IMR-90 (cell line): ENCODE measurements at regions of chr17 and their contacts with region 1.

Region 1: GRCh38 chr17:13544292-13544691 is 57.4 kb downstream of the HS3ST3A1 start:
- DNase-seq: peak; percentile 98
- ATAC-seq: peak; percentile 77
- H3K4me3 ChIP-seq: no peak overlapping the region; the same call in 1 of the 2 replicates
- H3K27ac ChIP-seq: peak overlapping the region; percentile 40; the same call in 1 of the 2 replicates
- H3K4me1 ChIP-seq: peaks cover 17% of the 10 kb centered on the region
- H3K27me3 ChIP-seq: no peaks in the 10 kb centered on the region
- CTCF ChIP-seq: no peak
- POLR2A ChIP-seq: no peak
- RAD21 ChIP-seq: no peak

Region 2: DNA sequence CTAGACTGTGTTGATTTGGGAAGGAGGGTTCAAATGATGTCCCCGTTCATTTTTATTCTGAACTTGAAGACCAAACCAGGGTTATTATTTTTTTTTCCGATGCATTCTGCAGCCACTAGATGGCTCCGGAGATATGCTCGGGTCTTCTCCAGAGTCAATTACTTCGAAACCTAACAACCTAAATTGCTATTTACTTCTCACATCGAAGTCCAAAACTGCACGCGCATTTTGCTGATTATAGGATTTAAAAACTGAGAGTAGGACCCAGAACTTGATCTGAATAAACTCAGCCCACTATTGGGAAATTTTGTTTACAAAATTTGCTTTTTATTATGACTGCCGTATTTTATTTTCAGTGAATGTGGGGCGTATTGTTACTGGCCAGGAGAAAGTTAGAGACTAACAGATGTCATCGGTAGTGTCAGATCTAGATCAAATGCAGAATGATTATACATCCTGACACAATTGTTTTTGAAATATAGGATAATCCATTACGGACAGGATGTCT is 206.4 kb before region 1 on chr17:
- CTCF ChIA-PET with region 1: no interaction called
- POLR2A ChIA-PET with region 1: no interaction called
- dilution Hi-C with region 1: no loop called
- in situ Hi-C with region 1: no loop called
- intact Hi-C with region 1: loop called (anchors 5 kb)
- DNase-seq: peak; percentile 78
- ATAC-seq: peak; percentile 84
- H3K4me3 ChIP-seq: peak overlapping the region; percentile 54
- H3K27ac ChIP-seq: no peak overlapping the region
- H3K4me1 ChIP-seq: peaks cover 5% of the 10 kb centered on the region
- H3K27me3 ChIP-seq: no peaks in the 10 kb centered on the region
- CTCF ChIP-seq: peak; percentile 92
- POLR2A ChIP-seq: peak; percentile 45; the same call in 1 of the 2 replicates
- RAD21 ChIP-seq: peak; percentile 93

Region 3: GRCh38 chr17:13420878-13421277 is 123.4 kb before region 1 on chr17:
- CTCF ChIA-PET with region 1: no interaction called
- POLR2A ChIA-PET with region 1: no interaction called
- dilution Hi-C with region 1: no loop called
- in situ Hi-C with region 1: no loop called
- intact Hi-C with region 1: no loop called
- DNase-seq: peak; percentile 92
- ATAC-seq: peak; percentile 70
- H3K4me3 ChIP-seq: no peak overlapping the region
- H3K27ac ChIP-seq: peak overlapping the region; percentile 63; the same call in 1 of the 2 replicates
- H3K4me1 ChIP-seq: peaks cover 21% of the 10 kb centered on the region
- H3K27me3 ChIP-seq: no peaks in the 10 kb centered on the region
- CTCF ChIP-seq: no peak
- POLR2A ChIP-seq: no peak
- RAD21 ChIP-seq: no peak

Region 4: DNA sequence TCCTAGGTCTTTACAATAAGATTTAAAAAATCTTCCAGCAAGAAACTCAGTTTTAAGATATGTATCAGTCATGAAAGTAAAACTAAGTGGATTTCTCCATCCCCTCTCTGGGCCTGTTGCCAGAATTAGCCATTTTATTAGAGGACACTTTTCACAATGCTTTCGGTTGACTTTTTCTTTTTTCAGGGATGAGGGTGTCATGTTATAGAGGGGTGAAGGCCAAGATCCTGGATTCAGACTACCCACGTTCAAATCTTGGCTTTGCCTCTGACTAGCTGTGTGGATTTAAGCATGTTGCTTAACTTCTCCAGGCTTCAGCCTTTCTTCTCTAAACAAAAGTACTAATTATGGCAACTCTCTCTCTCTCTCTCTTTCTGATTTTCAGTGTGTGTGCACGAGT is 413.3 kb after region 1 on chr17:
- CTCF ChIA-PET with region 1: no interaction called
- POLR2A ChIA-PET with region 1: interaction called, 13 read pairs
- dilution Hi-C with region 1: no loop called
- in situ Hi-C with region 1: no loop called
- intact Hi-C with region 1: no loop called
- DNase-seq: peak; percentile 49
- ATAC-seq: peak; percentile 24; the same call in 1 of the 2 replicates
- H3K4me3 ChIP-seq: no peak overlapping the region
- H3K27ac ChIP-seq: no peak overlapping the region
- H3K4me1 ChIP-seq: no peaks in the 10 kb centered on the region
- H3K27me3 ChIP-seq: no peaks in the 10 kb centered on the region
- CTCF ChIP-seq: no peak
- POLR2A ChIP-seq: no peak
- RAD21 ChIP-seq: no peak